ENCODE measurements at regions of chr5 and their contacts with region 1.

Region 1: DNA sequence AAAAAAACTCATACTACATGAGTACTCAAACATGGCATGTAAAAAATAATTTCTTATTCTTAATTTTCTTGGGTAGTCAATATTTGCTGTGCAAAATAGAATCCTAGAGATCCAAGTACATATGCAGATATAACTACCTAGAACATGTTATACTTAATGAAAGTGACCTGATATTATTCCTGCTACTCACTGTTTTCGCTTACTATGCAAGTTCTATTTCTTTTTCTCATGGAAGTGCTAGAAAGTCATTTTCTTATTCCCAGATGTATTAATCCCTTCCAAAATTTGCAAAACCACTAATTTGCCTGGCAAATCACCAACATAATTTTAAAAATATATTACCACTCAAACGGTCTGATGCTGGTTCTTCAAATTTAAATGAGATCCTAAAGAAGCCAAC is 19.2 kb upstream of the PLAC8L1 start:
- DNase-seq: no peak
- ATAC-seq: no peak
- H3K4me3 Mint-ChIP-seq: no peak overlapping the region
- H3K27ac Mint-ChIP-seq: no peak overlapping the region
- H3K4me1 Mint-ChIP-seq: no peaks in the 10 kb centered on the region
- H3K27me3 Mint-ChIP-seq: no peaks in the 10 kb centered on the region
- CTCF ChIP-seq: no peak

Region 2: GRCh38 chr5:146165460-146165859 is 40.9 kb after region 1 on chr5:
- CTCF ChIA-PET with region 1: no interaction called
- POLR2A ChIA-PET with region 1: no interaction called
- intact Hi-C with region 1: loop called (anchors 5 kb)
- DNase-seq: no peak
- ATAC-seq: no peak
- H3K4me3 Mint-ChIP-seq: no peak overlapping the region
- H3K27ac Mint-ChIP-seq: no peak overlapping the region
- H3K4me1 Mint-ChIP-seq: no peaks in the 10 kb centered on the region
- H3K27me3 Mint-ChIP-seq: no peaks in the 10 kb centered on the region
- CTCF ChIP-seq: no peak

Region 3: GRCh38 chr5:146173597-146173996 is 49.0 kb after region 1 on chr5:
- CTCF ChIA-PET with region 1: no interaction called
- POLR2A ChIA-PET with region 1: no interaction called
- intact Hi-C with region 1: loop called (anchors 5 kb)
- DNase-seq: no peak
- ATAC-seq: no peak
- H3K4me3 Mint-ChIP-seq: no peak overlapping the region
- H3K27ac Mint-ChIP-seq: peak overlapping the region; percentile 6
- H3K4me1 Mint-ChIP-seq: peaks cover 13% of the 10 kb centered on the region
- H3K27me3 Mint-ChIP-seq: no peaks in the 10 kb centered on the region
- CTCF ChIP-seq: no peak

Region 4: GRCh38 chr5:146484714-146485391 is 360.3 kb after region 1 on chr5:
- CTCF ChIA-PET with region 1: no interaction called
- POLR2A ChIA-PET with region 1: no interaction called
- intact Hi-C with region 1: loop called (anchors 10 kb)
- DNase-seq: no peak
- ATAC-seq: no peak
- H3K4me3 Mint-ChIP-seq: no peak overlapping the region
- H3K27ac Mint-ChIP-seq: no peak overlapping the region
- H3K4me1 Mint-ChIP-seq: no peaks in the 10 kb centered on the region
- H3K27me3 Mint-ChIP-seq: no peaks in the 10 kb centered on the region
- CTCF ChIP-seq: no peak